K562 (cell line): ENCODE measurements at regions of chr7 and their contacts with region 1.

Region 1: DNA sequence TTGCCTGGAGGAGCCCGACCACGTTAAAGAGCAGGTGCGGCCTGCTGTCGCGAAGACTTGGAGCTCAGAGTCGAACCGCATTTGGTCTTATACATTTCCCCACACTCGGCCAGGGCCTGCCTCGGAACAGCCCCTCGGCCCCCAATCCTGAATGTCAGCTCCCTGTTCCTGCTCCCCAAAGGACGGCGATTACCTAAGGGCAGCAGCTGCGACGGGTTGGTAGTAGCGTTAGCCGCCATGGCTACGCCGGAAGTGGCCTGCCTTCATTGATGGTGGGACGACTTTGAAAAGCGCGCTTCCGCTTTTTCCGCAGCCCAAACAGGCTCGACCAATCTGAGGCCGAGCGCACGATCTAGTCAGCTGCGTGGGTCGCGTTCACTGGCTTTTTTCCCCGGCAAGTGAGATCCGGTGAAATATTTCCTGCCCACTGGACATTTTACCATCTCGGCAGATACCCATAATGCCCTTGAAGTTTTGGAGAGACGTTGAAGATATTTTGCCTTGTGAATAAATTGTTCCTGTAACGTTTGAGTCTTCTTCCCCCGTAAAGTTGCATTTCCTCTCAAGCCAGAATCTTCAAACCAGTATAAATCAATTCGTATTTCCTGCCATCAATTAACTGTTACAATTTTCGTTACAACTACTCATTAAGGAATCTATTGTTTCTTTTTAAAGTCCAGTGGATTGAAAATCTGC is at the start of gene LSM5:
- DNase-seq: peak; percentile 71 to 97 (median 77)
- ATAC-seq: peak; percentile 87
- H3K4me3 ChIP-seq: peak within 1 kb of the TSS; percentile 62
- H3K27ac ChIP-seq: peak within 1 kb of the TSS; percentile 81
- H3K4me1 ChIP-seq: peaks cover 0 to 3% of the 10 kb centered on the region in 2 experiments; a peak in 2 of 5 replicates
- H3K27me3 ChIP-seq: no peaks in the 10 kb centered on the region
- CTCF ChIP-seq: no peak
- EP300 ChIP-seq: peak; percentile 46; the same call in 1 of the 2 replicates
- POLR2A ChIP-seq: peak; percentile 91
- RAD21 ChIP-seq: no peak; a peak in 1 of 4 replicates
- polyA plus RNA-seq, gene LSM5: 513 to 620 TPM

Region 2: GRCh38 chr7:32639122-32639521 is 148.8 kb after region 1 on chr7:
- CTCF ChIA-PET with region 1: no interaction called
- POLR2A ChIA-PET with region 1: no interaction called
- in situ Hi-C with region 1: no loop called
- intact Hi-C with region 1: loop called (anchors 2 kb)
- DNase-seq: no peak
- ATAC-seq: no peak
- H3K4me3 ChIP-seq: no peak overlapping the region
- H3K27ac ChIP-seq: no peak overlapping the region
- H3K4me1 ChIP-seq: peaks cover 0 to 7% of the 10 kb centered on the region in 2 experiments; a peak in 3 of 5 replicates
- H3K27me3 ChIP-seq: no peaks in the 10 kb centered on the region
- CTCF ChIP-seq: no peak
- EP300 ChIP-seq: no peak
- POLR2A ChIP-seq: no peak
- RAD21 ChIP-seq: no peak

Region 3: DNA sequence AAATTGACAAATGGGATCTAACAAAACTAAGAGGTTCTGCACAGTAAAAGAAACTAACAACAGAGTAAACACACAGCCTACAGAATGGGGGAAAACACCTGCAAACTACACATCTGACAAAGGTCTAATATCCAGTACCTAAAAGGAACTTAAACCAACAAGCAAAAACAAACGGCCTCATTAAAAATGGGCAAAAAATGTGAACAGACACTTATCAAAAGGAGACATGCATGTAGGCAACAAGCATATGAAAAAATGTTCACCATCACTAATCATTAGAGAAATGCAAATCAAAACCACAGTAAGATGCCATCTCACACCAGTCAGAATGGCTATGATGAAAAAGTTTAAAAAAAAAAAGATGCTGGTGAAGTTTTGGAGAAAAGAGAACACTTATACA is 203.9 kb after region 1 on chr7:
- CTCF ChIA-PET with region 1: no interaction called
- POLR2A ChIA-PET with region 1: no interaction called
- in situ Hi-C with region 1: no loop called
- intact Hi-C with region 1: no loop called
- DNase-seq: no peak
- ATAC-seq: no peak
- H3K4me3 ChIP-seq: no peak overlapping the region
- H3K27ac ChIP-seq: no peak overlapping the region
- H3K4me1 ChIP-seq: peaks cover 0 to 6% of the 10 kb centered on the region in 2 experiments; a peak in 1 of 5 replicates
- H3K27me3 ChIP-seq: no peaks in the 10 kb centered on the region
- CTCF ChIP-seq: no peak
- EP300 ChIP-seq: no peak
- POLR2A ChIP-seq: no peak
- RAD21 ChIP-seq: no peak